HEK293 (cell line): ENCODE measurements at regions of chr12 and their contacts with region 1.

Region 1: GRCh38 chr12:30440826-30441602 is 254.7 kb downstream of the IPO8 start:
- H3K4me3 ChIP-seq: no peak overlapping the region
- H3K27ac ChIP-seq: no peak overlapping the region
- H3K4me1 ChIP-seq: no peaks in the 10 kb centered on the region
- CTCF ChIP-seq: no peak

Region 2: DNA sequence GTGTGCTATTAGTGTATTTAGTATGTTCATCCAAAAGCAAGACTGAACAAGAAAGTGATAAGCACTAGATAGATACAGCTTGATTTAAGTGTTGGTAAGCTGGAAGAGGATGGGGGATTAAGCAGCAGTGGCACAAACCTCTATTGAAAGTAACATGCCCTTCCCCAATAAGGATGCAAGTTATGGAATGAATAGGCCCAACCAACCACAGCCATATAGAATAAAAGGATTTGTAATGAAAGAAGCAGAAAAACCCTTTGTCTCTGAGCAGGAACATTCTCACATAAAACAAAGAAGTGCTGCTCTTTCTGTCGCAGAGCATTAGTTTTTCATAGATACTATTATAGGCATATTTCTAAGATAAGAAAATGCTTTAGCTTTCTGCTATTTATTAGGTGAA is 56.0 kb before region 1 on chr12:
- CTCF ChIA-PET with region 1: no interaction called
- POLR2A ChIA-PET with region 1: no interaction called
- H3K4me3 ChIP-seq: no peak overlapping the region
- H3K27ac ChIP-seq: no peak overlapping the region
- H3K4me1 ChIP-seq: no peaks in the 10 kb centered on the region
- CTCF ChIP-seq: no peak

Region 3: GRCh38 chr12:30457621-30458289 is 16.7 kb after region 1 on chr12:
- CTCF ChIA-PET with region 1: interaction called, 18 read pairs
- POLR2A ChIA-PET with region 1: no interaction called
- H3K4me3 ChIP-seq: no peak overlapping the region
- H3K27ac ChIP-seq: no peak overlapping the region
- H3K4me1 ChIP-seq: no peaks in the 10 kb centered on the region
- CTCF ChIP-seq: no peak